Endothelial cell of umbilical vein (primary cell): ENCODE measurements at regions of chr16 and their contacts with region 1.

Region 1: GRCh38 chr16:66872943-66873684 is 7.2 kb upstream of the PDP2 start:
- DNase-seq: peak; percentile 96
- H3K4me3 ChIP-seq: no peak overlapping the region
- H3K27ac ChIP-seq: no peak overlapping the region
- H3K4me1 ChIP-seq: peaks cover 12% of the 10 kb centered on the region
- H3K27me3 ChIP-seq: peaks cover 0 to 2% of the 10 kb centered on the region in 2 experiments
- CTCF ChIP-seq: peak; percentile 99
- POLR2A ChIP-seq: peak; percentile 58

Region 2: GRCh38 chr16:66640724-66641314 is 232.3 kb before region 1 on chr16:
- CTCF ChIA-PET with region 1: no interaction called
- POLR2A ChIA-PET with region 1: no interaction called
- dilution Hi-C with region 1: no loop called
- intact Hi-C with region 1: no loop called
- DNase-seq: no peak
- H3K4me3 ChIP-seq: no peak overlapping the region
- H3K27ac ChIP-seq: no peak overlapping the region
- H3K4me1 ChIP-seq: no peaks in the 10 kb centered on the region
- H3K27me3 ChIP-seq: no peaks in the 10 kb centered on the region
- CTCF ChIP-seq: no peak
- POLR2A ChIP-seq: no peak

Region 3: GRCh38 chr16:66650707-66651473 is 222.2 kb before region 1 on chr16:
- CTCF ChIA-PET with region 1: interaction called, 26 read pairs
- POLR2A ChIA-PET with region 1: no interaction called
- dilution Hi-C with region 1: no loop called
- intact Hi-C with region 1: no loop called
- DNase-seq: peak; percentile 81
- H3K4me3 ChIP-seq: no peak overlapping the region
- H3K27ac ChIP-seq: no peak overlapping the region
- H3K4me1 ChIP-seq: no peaks in the 10 kb centered on the region
- H3K27me3 ChIP-seq: no peaks in the 10 kb centered on the region
- CTCF ChIP-seq: peak; percentile 94
- POLR2A ChIP-seq: no peak

Region 4: DNA sequence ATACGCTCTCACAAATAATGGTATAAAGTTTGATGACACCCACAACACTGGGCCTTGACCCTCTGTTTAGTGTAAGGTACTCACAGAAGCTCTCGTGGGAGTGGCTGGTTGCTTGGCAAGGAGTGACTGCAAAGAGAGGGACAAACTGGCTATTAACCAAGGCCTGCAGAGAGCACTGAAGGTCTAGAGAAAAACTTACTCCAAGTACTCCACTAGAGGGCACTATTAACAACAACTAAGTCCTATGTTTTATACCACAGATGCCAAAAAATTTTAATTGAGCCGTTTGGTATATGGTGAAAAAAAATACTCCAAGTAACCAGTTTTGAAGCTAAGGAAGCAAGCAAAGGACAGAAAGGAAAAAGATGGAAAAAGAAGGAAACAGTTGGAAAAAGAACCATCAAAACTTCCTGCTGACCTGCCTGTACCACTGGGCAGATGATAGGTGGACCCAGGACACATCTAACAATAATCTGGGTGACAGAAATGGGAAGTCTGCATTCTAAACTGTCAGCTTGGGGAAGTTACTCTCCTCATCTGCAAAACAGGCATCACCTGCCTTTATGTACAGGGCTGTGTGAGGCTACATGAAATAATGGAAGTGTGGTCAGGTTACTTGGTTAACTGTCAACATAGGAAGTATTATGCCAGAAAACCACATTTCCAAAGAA is 144.9 kb before region 1 on chr16:
- CTCF ChIA-PET with region 1: interaction called, 29 read pairs
- POLR2A ChIA-PET with region 1: no interaction called
- dilution Hi-C with region 1: no loop called
- intact Hi-C with region 1: loop called (anchors 1 kb)
- DNase-seq: peak; percentile 70
- H3K4me3 ChIP-seq: no peak overlapping the region
- H3K27ac ChIP-seq: no peak overlapping the region
- H3K4me1 ChIP-seq: no peaks in the 10 kb centered on the region
- H3K27me3 ChIP-seq: no peaks in the 10 kb centered on the region
- CTCF ChIP-seq: peak; percentile 43 to 48
- POLR2A ChIP-seq: no peak

Region 5: DNA sequence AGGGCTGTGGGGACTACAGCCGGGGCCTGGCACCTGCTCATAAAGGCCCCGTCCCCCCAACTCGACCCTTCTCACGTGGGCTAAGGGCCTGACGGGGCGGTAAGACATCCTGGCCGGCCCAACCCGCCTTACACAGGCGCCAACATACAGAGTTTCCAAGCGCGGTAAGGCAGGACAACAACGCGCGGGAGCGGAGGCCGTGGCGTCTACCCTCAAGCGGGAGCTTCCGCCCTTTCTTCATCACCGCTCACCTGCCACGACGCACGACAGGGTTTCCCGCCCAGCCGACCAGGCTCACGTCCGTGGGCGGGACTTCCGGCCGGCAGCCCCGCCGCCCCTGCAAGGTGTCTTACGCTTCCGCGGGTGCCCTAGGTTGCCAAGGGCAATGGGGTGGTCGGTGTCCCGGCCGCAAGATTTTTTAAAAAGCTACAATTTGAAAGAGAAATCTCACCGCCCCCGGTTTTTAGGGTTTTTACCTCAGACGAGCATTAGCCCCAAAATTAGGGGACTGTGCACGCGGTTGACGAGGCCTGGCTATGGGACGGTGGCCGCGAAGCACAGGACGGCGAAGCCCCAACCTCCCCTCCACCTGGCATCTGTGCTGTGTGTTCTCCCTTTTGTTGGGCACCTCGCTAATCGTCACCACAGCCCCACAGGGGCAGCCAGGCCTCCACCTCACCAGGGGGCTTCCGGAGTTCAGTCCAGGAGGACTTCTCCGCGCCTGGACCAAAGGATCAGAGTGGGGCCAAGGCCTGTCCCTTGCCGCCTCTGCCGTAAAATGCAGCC is 71.6 kb before region 1 on chr16 and contains the start of gene TERB1:
- CTCF ChIA-PET with region 1: interaction called, 16 read pairs
- POLR2A ChIA-PET with region 1: no interaction called
- dilution Hi-C with region 1: no loop called
- intact Hi-C with region 1: no loop called
- DNase-seq: no peak
- H3K4me3 ChIP-seq: no peak within 1 kb of the TSS
- H3K27ac ChIP-seq: no peak within 1 kb of the TSS
- H3K4me1 ChIP-seq: no peaks in the 10 kb centered on the region
- H3K27me3 ChIP-seq: no peaks in the 10 kb centered on the region
- CTCF ChIP-seq: no peak
- POLR2A ChIP-seq: no peak
- total RNA-seq, gene TERB1: not detected in 2 replicates

Region 6: DNA sequence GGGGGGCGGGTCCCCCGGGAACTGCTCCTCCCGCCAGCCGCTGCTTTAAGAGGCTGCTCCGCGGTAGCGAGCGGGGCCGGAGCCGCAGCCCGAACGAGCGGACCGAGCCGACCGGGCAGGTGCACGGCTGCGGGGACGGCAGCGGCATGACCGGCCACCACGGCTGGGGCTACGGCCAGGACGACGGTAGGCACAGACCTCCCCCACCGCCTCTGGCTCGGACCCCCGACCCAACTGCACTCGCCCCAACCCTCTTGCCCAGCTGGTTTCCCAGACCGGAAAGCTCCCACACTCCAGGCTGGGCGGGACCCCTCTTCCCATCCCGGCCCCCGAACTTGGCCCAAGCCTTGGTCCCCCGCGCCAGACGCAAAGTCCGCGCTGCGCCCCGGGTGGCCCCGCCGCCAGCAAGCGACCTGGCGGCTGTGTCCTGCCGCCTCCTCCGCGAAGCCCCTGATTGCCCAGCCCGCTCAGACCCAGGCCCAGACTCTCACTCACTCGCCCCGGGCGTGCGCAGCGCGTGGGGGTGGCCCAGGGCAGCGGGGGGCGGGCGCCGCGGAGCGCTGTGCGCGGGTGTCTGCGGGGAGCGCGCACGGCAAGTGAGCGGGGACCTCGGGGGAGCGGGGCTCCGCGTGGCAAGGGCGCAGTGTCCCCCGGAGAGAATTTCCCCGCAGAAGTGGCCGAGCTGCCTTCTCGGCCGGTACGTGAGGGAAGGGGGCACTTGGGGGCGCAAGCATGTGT is 28.6 kb before region 1 on chr16 and contains the start of gene CA7:
- CTCF ChIA-PET with region 1: interaction called, 31 read pairs
- POLR2A ChIA-PET with region 1: no interaction called
- dilution Hi-C with region 1: no loop called
- intact Hi-C with region 1: no loop called
- DNase-seq: no peak
- H3K4me3 ChIP-seq: peak within 1 kb of the TSS in 1 of 3 experiments; percentile 1
- H3K27ac ChIP-seq: no peak within 1 kb of the TSS
- H3K4me1 ChIP-seq: peaks cover 2% of the 10 kb centered on the region
- H3K27me3 ChIP-seq: peaks cover 46 to 50% of the 10 kb centered on the region in 2 experiments
- CTCF ChIP-seq: no peak
- POLR2A ChIP-seq: no peak
- total RNA-seq, gene CA7: not detected in 2 replicates

Region 7: DNA sequence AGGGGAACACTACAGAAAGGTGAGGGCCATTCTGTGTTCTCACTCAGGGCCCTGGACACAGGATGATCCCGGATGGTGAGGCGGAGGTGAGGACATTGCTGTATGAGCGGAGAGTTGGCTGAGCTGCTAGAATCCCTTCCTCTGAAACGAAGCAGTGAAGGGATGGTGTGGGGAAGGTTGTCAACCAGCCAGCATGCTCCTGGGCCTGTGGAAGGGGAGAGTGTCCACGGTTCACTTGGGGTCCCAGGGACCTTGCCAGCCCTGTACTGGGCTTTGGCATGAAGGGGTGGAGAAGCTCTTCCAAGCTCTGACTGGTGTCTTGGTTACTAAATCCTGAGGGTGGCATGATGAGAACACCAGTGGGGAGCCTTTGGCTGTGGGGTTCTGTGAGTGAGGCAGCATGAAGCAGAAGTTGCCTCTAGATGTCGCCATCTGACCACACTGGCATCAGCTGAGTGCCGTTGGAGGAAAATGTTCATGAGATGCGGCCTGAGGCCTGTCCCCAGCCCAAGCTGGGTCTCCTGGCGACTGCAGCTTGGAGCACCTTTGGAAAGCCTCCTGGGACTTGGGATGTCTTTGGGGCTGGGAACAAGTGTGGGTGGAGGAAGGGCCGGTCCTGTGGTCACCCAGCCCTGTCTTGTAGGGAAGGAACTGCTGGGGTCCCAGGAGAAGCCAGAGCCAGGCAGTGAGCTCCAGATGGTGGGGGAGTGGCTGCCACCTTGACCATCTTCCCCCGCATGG is 22.0 kb after region 1 on chr16:
- CTCF ChIA-PET with region 1: interaction called, 15 read pairs
- POLR2A ChIA-PET with region 1: no interaction called
- dilution Hi-C with region 1: no loop called
- intact Hi-C with region 1: no loop called
- DNase-seq: peak; percentile 64
- H3K4me3 ChIP-seq: no peak overlapping the region
- H3K27ac ChIP-seq: no peak overlapping the region
- H3K4me1 ChIP-seq: peaks cover 5% of the 10 kb centered on the region
- H3K27me3 ChIP-seq: no peaks in the 10 kb centered on the region
- CTCF ChIP-seq: peak; percentile 74 to 89
- POLR2A ChIP-seq: no peak

Region 8: GRCh38 chr16:66959704-66960161 is 86.6 kb after region 1 on chr16:
- CTCF ChIA-PET with region 1: no interaction called
- POLR2A ChIA-PET with region 1: no interaction called
- dilution Hi-C with region 1: no loop called
- intact Hi-C with region 1: no loop called
- DNase-seq: no peak
- H3K4me3 ChIP-seq: no peak overlapping the region
- H3K27ac ChIP-seq: no peak overlapping the region
- H3K4me1 ChIP-seq: no peaks in the 10 kb centered on the region
- H3K27me3 ChIP-seq: peaks cover 1 to 2% of the 10 kb centered on the region in 2 experiments
- CTCF ChIP-seq: no peak
- POLR2A ChIP-seq: no peak

Region 9: DNA sequence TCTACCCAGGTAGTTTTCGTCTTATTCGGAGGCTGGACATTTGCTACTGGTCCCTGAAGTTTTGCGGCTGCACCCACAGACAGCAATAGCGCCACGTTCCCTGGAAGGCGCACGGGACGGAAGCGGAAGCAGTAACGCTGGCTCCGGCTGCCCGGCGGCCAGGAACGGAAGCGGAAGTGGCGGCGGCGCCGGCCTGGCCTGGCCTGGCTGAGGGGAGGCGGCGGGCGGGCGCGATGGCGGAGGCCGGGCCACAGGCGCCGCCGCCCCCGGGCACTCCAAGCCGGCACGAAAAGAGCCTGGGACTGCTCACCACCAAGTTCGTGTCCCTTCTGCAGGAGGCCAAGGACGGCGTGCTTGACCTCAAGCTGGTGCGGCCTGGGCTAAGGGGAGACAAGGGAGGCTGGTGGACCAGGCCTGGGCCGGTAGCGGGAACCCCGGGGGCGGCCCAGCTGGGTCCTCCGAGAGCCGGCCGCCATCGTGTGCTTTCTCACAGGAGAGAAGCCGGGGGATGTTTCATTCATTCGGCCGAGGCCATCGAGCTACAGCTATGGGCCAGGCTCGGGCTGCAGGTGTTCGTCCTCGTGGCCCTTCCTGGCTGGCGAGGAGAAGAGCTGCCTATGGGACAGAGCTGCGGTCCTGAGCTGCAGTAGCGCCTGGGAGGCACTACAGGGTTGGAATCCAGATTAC is 319.0 kb after region 1 on chr16 and contains the start of gene E2F4:
- CTCF ChIA-PET with region 1: no interaction called
- POLR2A ChIA-PET with region 1: no interaction called
- dilution Hi-C with region 1: no loop called
- intact Hi-C with region 1: no loop called
- DNase-seq: peak; percentile 88
- H3K4me3 ChIP-seq: peak within 1 kb of the TSS; percentile 54 to 83 (median 57)
- H3K27ac ChIP-seq: peak within 1 kb of the TSS; percentile 88
- H3K4me1 ChIP-seq: peaks cover 36% of the 10 kb centered on the region
- H3K27me3 ChIP-seq: no peaks in the 10 kb centered on the region
- CTCF ChIP-seq: no peak
- POLR2A ChIP-seq: peak; percentile 93
- total RNA-seq, gene E2F4: 110 and 112 TPM in 2 replicates